HCT116 (cell line): ENCODE measurements at regions of chr18 and their contacts with region 1.

Region 1: GRCh38 chr18:42114310-42114943 is 159.4 kb downstream of the PIK3C3 start:
- DNase-seq: peak; percentile 38
- ATAC-seq: peak; percentile 87
- H3K4me3 ChIP-seq: no peak overlapping the region
- H3K27ac ChIP-seq: no peak overlapping the region
- H3K4me1 ChIP-seq: 0 out of 4 replicates have a peak, but pooled peaks cover 0 to 3% of the 10 kb centered on the region in 2 experiments
- H3K27me3 ChIP-seq: no peaks in the 10 kb centered on the region
- CTCF ChIP-seq: peak; percentile 41 to 88 (median 69); a peak in 5 of 6 replicates
- POLR2A ChIP-seq: no peak
- RAD21 ChIP-seq: peak; percentile 74

Region 2: DNA sequence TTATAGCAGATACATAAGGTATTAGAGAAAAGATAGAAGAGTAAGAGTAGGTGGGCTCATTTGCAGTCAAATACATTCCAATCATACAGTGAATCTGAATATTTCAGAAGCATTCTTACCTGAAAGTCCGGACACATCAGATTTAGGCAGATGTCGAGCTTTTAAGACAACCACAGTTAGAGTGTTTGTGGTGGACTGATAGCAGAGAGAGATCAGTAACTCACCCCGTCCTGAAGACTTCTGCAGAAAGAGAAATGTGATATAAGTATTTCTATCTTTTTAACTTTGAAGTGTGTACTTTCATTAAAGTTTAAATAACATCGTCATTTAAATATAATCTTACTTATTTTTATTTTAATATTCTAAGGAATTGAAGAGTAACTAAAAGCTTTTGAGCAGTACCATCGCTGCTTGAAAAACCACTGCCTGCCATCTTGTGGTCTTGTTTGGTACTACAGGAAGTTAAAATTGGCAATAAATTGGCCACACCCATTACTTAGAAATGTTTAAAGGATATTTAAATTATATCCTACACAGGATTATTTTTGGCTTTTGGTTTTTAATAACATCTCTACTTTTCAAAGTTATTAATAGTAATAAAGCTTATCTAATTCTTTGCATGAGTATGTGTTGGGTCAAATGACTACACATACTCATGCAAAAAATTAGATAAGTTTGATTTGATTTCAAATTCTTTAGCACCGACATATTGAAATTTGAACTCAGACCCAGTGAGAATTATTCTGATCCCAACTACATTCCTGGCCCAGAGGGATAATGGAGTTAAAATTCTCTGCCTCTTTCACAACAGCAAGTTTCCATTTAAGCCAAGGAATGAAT is 1157.4 kb after region 1 on chr18:
- CTCF ChIA-PET with region 1: interaction called, 8 read pairs
- POLR2A ChIA-PET with region 1: no interaction called
- RAD21 ChIA-PET with region 1: no interaction called
- intact Hi-C with region 1: loop called (anchors 1 kb)
- DNase-seq: peak; percentile 19
- ATAC-seq: no peak
- H3K4me3 ChIP-seq: no peak overlapping the region
- H3K27ac ChIP-seq: no peak overlapping the region
- H3K4me1 ChIP-seq: no peaks in the 10 kb centered on the region
- H3K27me3 ChIP-seq: no peaks in the 10 kb centered on the region
- CTCF ChIP-seq: peak in 2 of 3 experiments; percentile 52 to 54; a peak in 3 of 6 replicates
- POLR2A ChIP-seq: no peak
- RAD21 ChIP-seq: peak; percentile 30

Region 3: GRCh38 chr18:43587538-43588153 is 1473.2 kb after region 1 on chr18:
- CTCF ChIA-PET with region 1: interaction called, 7 read pairs
- POLR2A ChIA-PET with region 1: no interaction called
- RAD21 ChIA-PET with region 1: no interaction called
- intact Hi-C with region 1: loop called (anchors 1 kb)
- DNase-seq: no peak
- ATAC-seq: no peak
- H3K4me3 ChIP-seq: no peak overlapping the region
- H3K27ac ChIP-seq: no peak overlapping the region
- H3K4me1 ChIP-seq: no peaks in the 10 kb centered on the region
- H3K27me3 ChIP-seq: no peaks in the 10 kb centered on the region
- CTCF ChIP-seq: peak in 2 of 3 experiments; percentile 49 to 58; a peak in 4 of 6 replicates
- POLR2A ChIP-seq: no peak
- RAD21 ChIP-seq: no peak